ENCODE measurements at regions of chr19 and their contacts with region 1.

Region 1: DNA sequence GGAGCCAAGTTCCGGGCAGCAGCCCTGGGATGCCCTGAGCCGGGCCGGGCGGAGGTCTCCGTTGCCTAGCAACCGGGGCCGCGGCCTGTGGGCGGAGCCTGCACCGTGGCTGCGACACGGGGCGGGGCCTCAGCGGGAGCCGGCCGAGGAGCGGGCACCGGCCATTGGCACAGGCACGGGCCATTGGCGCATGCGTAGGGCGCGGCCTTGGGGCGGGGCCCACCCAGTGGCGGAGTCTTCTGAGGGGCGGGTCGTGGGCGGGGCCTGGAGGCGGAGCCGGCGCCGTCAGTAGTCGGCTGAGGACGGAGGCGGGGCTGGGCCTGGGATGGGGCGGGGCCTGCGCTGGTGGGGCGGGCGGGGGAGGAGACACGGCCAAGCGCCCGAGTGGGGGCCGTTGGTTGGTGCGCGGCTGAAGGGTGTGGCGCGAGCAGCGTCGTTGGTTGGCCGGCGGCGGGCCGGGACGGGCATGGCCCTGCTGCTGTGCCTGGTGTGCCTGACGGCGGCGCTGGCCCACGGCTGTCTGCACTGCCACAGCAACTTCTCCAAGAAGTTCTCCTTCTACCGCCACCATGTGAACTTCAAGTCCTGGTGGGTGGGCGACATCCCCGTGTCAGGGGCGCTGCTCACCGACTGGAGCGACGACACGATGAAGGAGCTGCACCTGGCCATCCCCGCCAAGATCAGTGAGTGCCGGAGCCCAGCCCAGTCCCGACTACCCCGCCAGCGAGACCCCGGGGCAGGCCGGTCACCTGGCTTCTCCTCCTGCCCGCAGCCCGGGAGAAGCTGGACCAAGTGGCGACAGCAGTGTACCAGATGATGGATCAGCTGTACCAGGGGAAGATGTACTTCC is at the start of gene IZUMO4:
- DNase-seq: peak; percentile 71
- ATAC-seq: peak; percentile 83
- H3K4me3 ChIP-seq: peak within 1 kb of the TSS; percentile 93
- H3K27ac ChIP-seq: peak within 1 kb of the TSS; percentile 93
- H3K4me1 ChIP-seq: peaks cover 21% of the 10 kb centered on the region
- H3K27me3 ChIP-seq: no peaks in the 10 kb centered on the region
- CTCF ChIP-seq: peak; percentile 41 to 73 (median 54)
- EP300 ChIP-seq: no peak
- POLR2A ChIP-seq: no peak; the same call in 1 of the 2 replicates
- RAD21 ChIP-seq: no peak
- polyA plus RNA-seq, gene IZUMO4: 0.53 to 1.9 TPM

Region 2: GRCh38 chr19:1905071-1905862 is 191.4 kb before region 1 on chr19 and contains the starts of genes ADAT3 and SCAMP4:
- CTCF ChIA-PET with region 1: no interaction called
- POLR2A ChIA-PET with region 1: interaction called, 5 read pairs
- RAD21 ChIA-PET with region 1: no interaction called
- SMC1A ChIA-PET with region 1: no interaction called
- in situ Hi-C with region 1: no loop called
- intact Hi-C with region 1: loop called (anchors 10 kb)
- DNase-seq: peak; percentile 94
- ATAC-seq: peak; percentile 96
- H3K4me3 ChIP-seq: peak within 1 kb of the TSS; percentile 81
- H3K27ac ChIP-seq: peak within 1 kb of the TSS; percentile 96
- H3K4me1 ChIP-seq: peaks cover 37% of the 10 kb centered on the region
- H3K27me3 ChIP-seq: no peaks in the 10 kb centered on the region
- CTCF ChIP-seq: no peak
- EP300 ChIP-seq: no peak
- POLR2A ChIP-seq: peak; percentile 80
- RAD21 ChIP-seq: no peak
- polyA plus RNA-seq, gene ADAT3: not detected
- polyA plus RNA-seq, gene SCAMP4: 0.63 to 2.3 TPM

Region 3: DNA sequence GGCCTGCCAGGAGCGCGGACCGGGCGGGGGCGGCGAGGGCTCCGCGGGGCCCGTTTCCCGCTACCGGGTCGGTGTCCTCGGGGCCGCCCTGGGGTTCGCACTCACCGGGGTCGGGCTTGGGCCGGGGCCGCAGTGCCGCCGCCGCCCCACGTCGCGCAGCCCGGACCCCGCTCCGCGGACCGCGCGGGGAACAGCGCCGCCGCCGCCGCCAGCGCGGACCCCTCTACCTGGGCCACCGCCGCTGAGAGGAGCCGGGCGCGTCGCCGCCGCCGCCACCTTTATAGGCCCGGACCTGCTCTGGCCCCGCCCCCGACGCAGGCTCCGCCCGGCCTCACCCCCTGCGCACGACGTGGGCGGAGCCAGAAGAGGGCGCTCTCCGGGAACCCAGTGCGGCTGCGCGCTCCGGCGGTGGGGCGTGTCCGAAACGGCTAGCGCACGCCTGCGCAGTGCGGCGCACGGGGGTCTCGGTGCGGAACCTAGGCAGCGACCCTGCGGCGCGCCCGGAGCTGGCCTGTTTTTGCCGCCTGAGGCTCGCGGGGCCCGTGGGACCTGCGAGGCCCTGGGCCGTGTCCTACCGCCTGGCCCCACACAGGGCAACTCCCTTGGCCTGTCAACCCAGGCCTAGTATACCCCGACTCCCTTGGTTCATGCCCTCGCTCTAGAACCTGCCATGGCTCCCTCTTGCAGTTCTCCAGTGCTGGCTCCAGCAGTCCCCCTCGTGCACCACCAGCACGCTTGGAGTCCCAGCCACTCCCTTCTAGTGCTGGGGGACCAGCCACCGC is 45.5 kb before region 1 on chr19 and contains the start of gene MKNK2:
- CTCF ChIA-PET with region 1: interaction called, 27 read pairs
- POLR2A ChIA-PET with region 1: interaction called, 110 read pairs
- RAD21 ChIA-PET with region 1: interaction called, 14 read pairs
- SMC1A ChIA-PET with region 1: interaction called, 15 read pairs
- in situ Hi-C with region 1: no loop called
- intact Hi-C with region 1: loop called (anchors 2 kb)
- DNase-seq: no peak
- ATAC-seq: peak; percentile 48
- H3K4me3 ChIP-seq: peak within 1 kb of the TSS; percentile 83
- H3K27ac ChIP-seq: peak within 1 kb of the TSS; percentile 86
- H3K4me1 ChIP-seq: peaks cover 57% of the 10 kb centered on the region
- H3K27me3 ChIP-seq: no peaks in the 10 kb centered on the region
- CTCF ChIP-seq: peak; percentile 49 to 75 (median 55); a peak in 5 of 6 replicates
- EP300 ChIP-seq: no peak
- POLR2A ChIP-seq: peak; percentile 98
- RAD21 ChIP-seq: no peak
- polyA plus RNA-seq, gene MKNK2: 9.6 to 17.6 TPM

Region 4: DNA sequence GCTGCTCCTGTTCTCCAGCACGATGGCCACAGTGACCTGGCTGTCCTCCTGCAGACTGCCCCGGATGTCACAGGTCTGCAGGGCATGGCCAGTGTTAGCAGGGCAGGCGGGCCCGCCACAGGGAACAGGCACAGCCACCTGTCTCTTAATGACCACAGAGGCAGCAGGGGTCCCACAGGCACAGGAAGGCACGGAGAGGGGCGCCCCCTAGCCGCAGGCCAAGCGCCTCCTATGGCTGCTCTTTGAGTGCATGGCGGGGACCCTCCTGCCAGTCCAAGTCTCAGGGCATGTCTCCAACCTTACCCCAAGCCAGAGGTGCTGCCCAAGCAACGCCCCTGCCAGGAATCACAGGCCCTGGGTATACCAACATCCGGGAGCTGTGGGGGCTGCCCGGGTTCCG is 14.1 kb after region 1 on chr19:
- CTCF ChIA-PET with region 1: no interaction called
- POLR2A ChIA-PET with region 1: no interaction called
- RAD21 ChIA-PET with region 1: no interaction called
- SMC1A ChIA-PET with region 1: no interaction called
- in situ Hi-C with region 1: no loop called
- intact Hi-C with region 1: no loop called
- DNase-seq: no peak
- ATAC-seq: peak; percentile 34; the same call in 2 of the 3 replicates
- H3K4me3 ChIP-seq: no peak overlapping the region
- H3K27ac ChIP-seq: no peak overlapping the region
- H3K4me1 ChIP-seq: no peaks in the 10 kb centered on the region
- H3K27me3 ChIP-seq: no peaks in the 10 kb centered on the region
- CTCF ChIP-seq: peak in 1 of 3 experiments; percentile 13; a peak in 2 of 6 replicates
- EP300 ChIP-seq: no peak
- POLR2A ChIP-seq: peak; percentile 34; the same call in 1 of the 2 replicates
- RAD21 ChIP-seq: no peak

Region 5: GRCh38 chr19:2151339-2152229 is 54.9 kb after region 1 on chr19 and contains the start of gene AP3D1:
- CTCF ChIA-PET with region 1: interaction called, 3 read pairs
- POLR2A ChIA-PET with region 1: interaction called, 28 read pairs
- RAD21 ChIA-PET with region 1: interaction called, 3 read pairs
- SMC1A ChIA-PET with region 1: interaction called, 3 read pairs
- in situ Hi-C with region 1: no loop called
- intact Hi-C with region 1: loop called (anchors 2 kb)
- DNase-seq: peak; percentile 98
- ATAC-seq: peak; percentile 89
- H3K4me3 ChIP-seq: peak within 1 kb of the TSS; percentile 96
- H3K27ac ChIP-seq: peak within 1 kb of the TSS; percentile 91
- H3K4me1 ChIP-seq: peaks cover 20% of the 10 kb centered on the region
- H3K27me3 ChIP-seq: no peaks in the 10 kb centered on the region
- CTCF ChIP-seq: no peak
- EP300 ChIP-seq: no peak
- POLR2A ChIP-seq: peak; percentile 82
- RAD21 ChIP-seq: no peak
- polyA plus RNA-seq, gene AP3D1: 1.5 to 3.0 TPM

Region 6: GRCh38 chr19:2269244-2269947 is 172.7 kb after region 1 on chr19:
- CTCF ChIA-PET with region 1: no interaction called
- POLR2A ChIA-PET with region 1: no interaction called
- RAD21 ChIA-PET with region 1: no interaction called
- SMC1A ChIA-PET with region 1: no interaction called
- in situ Hi-C with region 1: no loop called
- intact Hi-C with region 1: loop called (anchors 10 kb)
- DNase-seq: peak; percentile 66
- ATAC-seq: peak; percentile 61
- H3K4me3 ChIP-seq: peak overlapping the region; percentile 95
- H3K27ac ChIP-seq: peak overlapping the region; percentile 89
- H3K4me1 ChIP-seq: peaks cover 20% of the 10 kb centered on the region
- H3K27me3 ChIP-seq: no peaks in the 10 kb centered on the region
- CTCF ChIP-seq: peak; percentile 5 to 9 (median 9); a peak in 1 of 6 replicates
- EP300 ChIP-seq: no peak
- POLR2A ChIP-seq: peak; percentile 100
- RAD21 ChIP-seq: no peak

Measured in GM12878 (cell line).